Psoas muscle (tissue), 8 donors: ENCODE measurements at regions of chr5 and their contacts with region 1.

Region 1: GRCh38 chr5:134465816-134466240 is 54.1 kb upstream of the CDKN2AIPNL start:
- DNase-seq: peak; percentile 92 to 95
- ATAC-seq: peak; percentile 82 to 88 (median 86)
- H3K4me3 ChIP-seq: peak overlapping the region; percentile 69
- H3K27ac ChIP-seq: peak overlapping the region; percentile 94
- H3K4me1 ChIP-seq: peaks cover 38% of the 10 kb centered on the region
- H3K27me3 ChIP-seq: no peaks in the 10 kb centered on the region
- CTCF ChIP-seq: no peak

Region 2: GRCh38 chr5:134446938-134447337 is 18.9 kb before region 1 on chr5:
- intact Hi-C with region 1: loop called in 1 of 2 experiments (anchors 2 kb)
- DNase-seq: no peak
- ATAC-seq: peak in 2 of 4 donors; percentile 2 to 9
- H3K4me3 ChIP-seq: no peak overlapping the region
- H3K27ac ChIP-seq: no peak overlapping the region
- H3K4me1 ChIP-seq: peaks cover 37% of the 10 kb centered on the region
- H3K27me3 ChIP-seq: no peaks in the 10 kb centered on the region
- CTCF ChIP-seq: no peak

Region 3: GRCh38 chr5:134503088-134503946 is 37.5 kb after region 1 on chr5:
- intact Hi-C with region 1: loop called (anchors 5 kb)
- DNase-seq: peak; percentile 86 to 87
- ATAC-seq: peak; percentile 35 to 75 (median 62)
- H3K4me3 ChIP-seq: no peak overlapping the region
- H3K27ac ChIP-seq: peak overlapping the region; percentile 70
- H3K4me1 ChIP-seq: peaks cover 41% of the 10 kb centered on the region
- H3K27me3 ChIP-seq: no peaks in the 10 kb centered on the region
- CTCF ChIP-seq: no peak

Region 4: GRCh38 chr5:134659456-134659855 is 193.6 kb after region 1 on chr5:
- intact Hi-C with region 1: no loop called
- DNase-seq: no peak
- ATAC-seq: no peak
- H3K4me3 ChIP-seq: no peak overlapping the region
- H3K27ac ChIP-seq: no peak overlapping the region
- H3K4me1 ChIP-seq: no peaks in the 10 kb centered on the region
- H3K27me3 ChIP-seq: no peaks in the 10 kb centered on the region
- CTCF ChIP-seq: no peak